HCT116 (cell line): ENCODE measurements at regions of chr6 and their contacts with region 1.

Region 1: GRCh38 chr6:3742426-3743344 is 8.8 kb downstream of the PXDC1 start:
- DNase-seq: peak; percentile 48
- ATAC-seq: peak; percentile 96
- H3K4me3 ChIP-seq: peak overlapping the region in 1 of 2 experiments; percentile 17; a peak in 2 of 4 replicates
- H3K27ac ChIP-seq: no peak overlapping the region
- H3K4me1 ChIP-seq: peaks cover 0 to 13% of the 10 kb centered on the region in 2 experiments; a peak in 2 of 4 replicates
- H3K27me3 ChIP-seq: no peaks in the 10 kb centered on the region
- CTCF ChIP-seq: peak; percentile 86 to 95 (median 91)
- POLR2A ChIP-seq: no peak
- RAD21 ChIP-seq: peak; percentile 98

Region 2: GRCh38 chr6:3650959-3651697 is 91.6 kb before region 1 on chr6:
- CTCF ChIA-PET with region 1: no interaction called
- POLR2A ChIA-PET with region 1: no interaction called
- RAD21 ChIA-PET with region 1: no interaction called
- intact Hi-C with region 1: no loop called
- DNase-seq: no peak
- ATAC-seq: no peak
- H3K4me3 ChIP-seq: no peak overlapping the region
- H3K27ac ChIP-seq: no peak overlapping the region
- H3K4me1 ChIP-seq: no peaks in the 10 kb centered on the region
- H3K27me3 ChIP-seq: no peaks in the 10 kb centered on the region
- CTCF ChIP-seq: no peak
- POLR2A ChIP-seq: no peak
- RAD21 ChIP-seq: no peak

Region 3: GRCh38 chr6:3990692-3991501 is 248.2 kb after region 1 on chr6:
- CTCF ChIA-PET with region 1: interaction called, 4 read pairs
- POLR2A ChIA-PET with region 1: no interaction called
- RAD21 ChIA-PET with region 1: no interaction called
- intact Hi-C with region 1: loop called (anchors 1 kb)
- DNase-seq: peak; percentile 65
- ATAC-seq: peak; percentile 95
- H3K4me3 ChIP-seq: no peak overlapping the region
- H3K27ac ChIP-seq: no peak overlapping the region
- H3K4me1 ChIP-seq: peaks cover 5 to 10% of the 10 kb centered on the region in 2 experiments
- H3K27me3 ChIP-seq: no peaks in the 10 kb centered on the region
- CTCF ChIP-seq: peak; percentile 67 to 94 (median 94)
- POLR2A ChIP-seq: no peak
- RAD21 ChIP-seq: peak; percentile 87

Region 4: DNA sequence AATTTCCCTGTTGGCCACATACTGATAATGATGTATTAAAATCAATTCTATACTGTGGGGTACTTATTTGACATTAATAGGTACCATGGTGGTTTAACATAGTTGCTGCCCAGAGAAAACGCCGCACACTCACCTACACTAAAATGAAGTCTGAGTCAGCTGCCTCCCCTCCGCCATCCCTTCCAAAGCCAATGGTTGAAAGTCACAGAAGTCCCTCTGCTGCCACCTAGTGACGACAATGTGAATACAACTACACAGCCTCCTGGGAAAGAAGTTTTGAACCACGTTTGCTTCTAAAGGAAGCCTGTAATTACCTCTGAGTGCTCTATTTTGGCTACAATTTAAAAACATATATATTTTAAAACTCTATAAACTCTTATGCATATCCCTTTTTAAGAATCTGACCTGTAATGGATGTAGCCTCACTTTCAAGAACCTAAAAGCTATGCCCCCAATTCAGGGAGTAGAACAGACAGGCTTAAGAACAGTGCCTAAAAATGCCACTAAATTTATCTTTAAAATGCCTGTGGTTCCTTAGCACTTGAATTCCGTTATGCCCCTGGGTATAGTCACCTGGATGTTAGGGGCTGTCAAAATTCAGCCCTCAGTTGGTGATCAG is 413.3 kb after region 1 on chr6:
- CTCF ChIA-PET with region 1: no interaction called
- POLR2A ChIA-PET with region 1: no interaction called
- RAD21 ChIA-PET with region 1: no interaction called
- intact Hi-C with region 1: loop called (anchors 5 kb)
- DNase-seq: peak; percentile 70
- ATAC-seq: peak; percentile 97
- H3K4me3 ChIP-seq: no peak overlapping the region
- H3K27ac ChIP-seq: no peak overlapping the region
- H3K4me1 ChIP-seq: peaks cover 0 to 6% of the 10 kb centered on the region in 2 experiments; a peak in 1 of 4 replicates
- H3K27me3 ChIP-seq: no peaks in the 10 kb centered on the region
- CTCF ChIP-seq: peak; percentile 76 to 83 (median 78); a peak in 5 of 6 replicates
- POLR2A ChIP-seq: no peak
- RAD21 ChIP-seq: peak; percentile 94

Region 5: GRCh38 chr6:4210629-4211423 is 468.1 kb after region 1 on chr6:
- CTCF ChIA-PET with region 1: interaction called, 3 read pairs
- POLR2A ChIA-PET with region 1: no interaction called
- RAD21 ChIA-PET with region 1: no interaction called
- intact Hi-C with region 1: loop called (anchors 10 kb)
- DNase-seq: peak; percentile 41
- ATAC-seq: peak; percentile 99
- H3K4me3 ChIP-seq: no peak overlapping the region
- H3K27ac ChIP-seq: no peak overlapping the region
- H3K4me1 ChIP-seq: no peaks in the 10 kb centered on the region
- H3K27me3 ChIP-seq: no peaks in the 10 kb centered on the region
- CTCF ChIP-seq: peak; percentile 50 to 82 (median 77); a peak in 5 of 6 replicates
- POLR2A ChIP-seq: no peak
- RAD21 ChIP-seq: peak; percentile 76

Region 6: DNA sequence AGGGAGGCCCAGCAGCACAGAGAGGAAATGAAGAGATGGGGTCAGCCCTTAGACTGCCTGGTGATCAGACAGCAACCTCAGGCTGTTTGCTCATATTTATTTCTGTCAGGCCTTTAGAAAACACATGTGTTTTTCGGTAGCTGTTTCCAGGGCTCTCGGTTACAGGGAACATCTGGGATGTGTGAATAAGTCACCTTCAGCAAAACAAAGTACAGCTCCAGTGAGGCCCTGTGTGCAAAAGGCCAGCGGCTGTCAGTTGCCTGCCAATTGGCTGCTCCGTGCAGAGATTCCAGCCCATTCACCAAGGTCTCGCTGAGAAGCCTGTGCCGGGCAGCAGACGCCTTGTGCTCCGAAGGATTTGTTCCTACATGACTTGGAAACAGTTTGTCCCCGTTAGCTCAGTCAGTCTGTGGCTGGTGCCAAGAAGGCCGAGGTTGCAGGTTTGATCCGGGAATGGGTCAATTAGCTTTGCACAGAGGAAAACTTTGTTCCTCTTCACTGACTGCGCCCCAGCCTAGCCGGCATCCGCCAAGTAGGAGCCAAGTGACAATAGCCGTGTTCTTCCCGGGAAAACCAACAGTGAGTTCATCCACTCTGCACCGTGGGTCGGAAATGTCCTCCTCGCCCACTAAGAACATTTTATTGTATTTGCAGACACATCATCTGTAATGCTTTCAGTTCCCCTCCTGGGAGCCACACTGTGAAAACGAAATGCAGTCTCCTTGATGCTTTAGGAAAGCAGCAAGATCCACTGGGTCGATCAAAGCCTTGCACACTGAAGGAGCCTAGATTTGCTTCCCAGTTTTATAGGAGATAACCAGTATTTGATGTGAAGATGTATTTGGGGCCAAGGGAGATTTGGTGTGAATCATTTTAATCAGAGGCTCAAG is 718.1 kb after region 1 on chr6:
- CTCF ChIA-PET with region 1: no interaction called
- POLR2A ChIA-PET with region 1: no interaction called
- RAD21 ChIA-PET with region 1: no interaction called
- intact Hi-C with region 1: no loop called
- DNase-seq: no peak
- ATAC-seq: no peak
- H3K4me3 ChIP-seq: no peak overlapping the region
- H3K27ac ChIP-seq: no peak overlapping the region
- H3K4me1 ChIP-seq: peaks cover 0 to 5% of the 10 kb centered on the region in 2 experiments; a peak in 1 of 4 replicates
- H3K27me3 ChIP-seq: no peaks in the 10 kb centered on the region
- CTCF ChIP-seq: no peak
- POLR2A ChIP-seq: no peak
- RAD21 ChIP-seq: no peak